ENCODE measurements at regions of chr11 and their contacts with region 1.

Region 1: GRCh38 chr11:2092956-2093412 is 46.2 kb downstream of the IGF2 start:
- DNase-seq: peak; percentile 95
- H3K4me3 ChIP-seq: no peak overlapping the region
- H3K27ac ChIP-seq: no peak overlapping the region
- H3K4me1 ChIP-seq: peaks cover 25% of the 10 kb centered on the region
- H3K27me3 ChIP-seq: peaks cover 25% of the 10 kb centered on the region
- CTCF ChIP-seq: no peak

Region 2: DNA sequence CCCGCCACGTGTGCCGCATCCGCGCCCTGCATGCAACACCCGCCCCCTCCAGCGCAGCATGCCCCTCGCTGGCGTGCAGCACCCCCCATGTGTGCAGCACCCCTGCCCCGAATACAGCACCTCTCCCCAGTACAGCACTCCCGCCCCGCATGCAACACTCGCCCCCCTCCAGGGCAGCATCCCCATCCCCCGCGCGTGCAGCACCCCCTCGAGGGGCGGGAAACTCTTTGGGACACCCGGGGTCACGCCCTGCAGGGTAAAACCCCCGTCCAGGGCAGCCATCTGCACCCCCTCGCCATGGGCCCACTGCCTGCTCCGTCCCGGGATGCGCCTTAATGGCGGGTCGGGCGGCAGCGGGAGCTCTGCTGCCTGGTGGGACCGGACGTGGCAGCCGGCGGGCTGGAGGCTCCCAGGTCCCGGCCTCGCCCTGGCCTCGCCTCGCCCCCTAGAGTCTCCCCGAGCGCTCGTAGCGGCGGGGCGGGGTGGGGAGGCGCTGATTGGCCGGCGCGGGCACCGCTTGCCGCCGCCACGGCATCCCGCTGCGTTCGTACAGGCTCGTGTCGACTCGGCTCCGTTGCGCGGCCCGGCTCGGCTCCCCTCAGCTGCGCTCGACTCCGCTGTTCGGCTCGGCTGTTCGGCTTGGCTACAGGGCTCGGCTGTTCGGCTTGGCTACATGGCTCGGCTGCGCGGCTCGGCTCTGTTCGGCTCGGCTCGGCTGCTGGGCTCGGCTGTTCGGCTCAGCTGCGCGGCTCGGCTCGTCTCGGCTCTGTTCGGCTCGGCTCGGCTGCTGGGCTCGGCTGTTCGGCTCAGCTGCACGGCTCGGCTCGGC is 703.7 kb before region 1 on chr11:
- CTCF ChIA-PET with region 1: no interaction called
- dilution Hi-C with region 1: loop called (anchors 10 kb)
- in situ Hi-C with region 1: no loop called
- intact Hi-C with region 1: no loop called
- DNase-seq: peak; percentile 92
- H3K4me3 ChIP-seq: peak overlapping the region; percentile 41 to 57 (median 55)
- H3K27ac ChIP-seq: no peak overlapping the region
- H3K4me1 ChIP-seq: peaks cover 9% of the 10 kb centered on the region
- H3K27me3 ChIP-seq: peaks cover 16% of the 10 kb centered on the region
- CTCF ChIP-seq: no peak

Region 3: GRCh38 chr11:2077061-2077802 is 15.8 kb before region 1 on chr11:
- CTCF ChIA-PET with region 1: no interaction called
- dilution Hi-C with region 1: no loop called
- in situ Hi-C with region 1: no loop called
- intact Hi-C with region 1: loop called (anchors 1 kb)
- DNase-seq: peak; percentile 94
- H3K4me3 ChIP-seq: no peak overlapping the region
- H3K27ac ChIP-seq: peak overlapping the region; percentile 87
- H3K4me1 ChIP-seq: peaks cover 26% of the 10 kb centered on the region
- H3K27me3 ChIP-seq: peaks cover 2% of the 10 kb centered on the region
- CTCF ChIP-seq: no peak

Region 4: DNA sequence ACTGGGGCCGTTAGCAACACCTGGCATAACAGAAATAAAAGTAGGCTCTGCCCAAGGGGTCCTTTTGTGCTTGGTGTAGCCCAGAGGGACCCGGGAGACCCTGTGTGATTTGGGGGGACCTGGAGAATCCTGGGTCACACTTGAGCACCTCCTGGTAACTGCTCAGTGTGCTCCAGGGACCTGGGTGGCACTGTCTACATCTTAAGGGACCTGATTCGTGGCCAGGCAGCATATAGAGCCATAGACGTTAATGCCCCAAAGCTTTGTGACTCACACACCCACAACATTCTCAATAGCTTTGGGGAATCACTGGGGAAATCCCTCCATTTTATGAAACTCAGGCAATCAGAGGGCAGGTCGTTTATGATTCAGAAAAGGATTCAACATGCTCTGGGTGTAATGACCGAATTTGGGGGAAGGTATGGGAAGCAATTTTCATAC is 49.8 kb after region 1 on chr11:
- CTCF ChIA-PET with region 1: no interaction called
- dilution Hi-C with region 1: no loop called
- in situ Hi-C with region 1: no loop called
- intact Hi-C with region 1: loop called (anchors 2 kb)
- DNase-seq: peak; percentile 89
- H3K4me3 ChIP-seq: no peak overlapping the region
- H3K27ac ChIP-seq: no peak overlapping the region
- H3K4me1 ChIP-seq: peaks cover 12% of the 10 kb centered on the region
- H3K27me3 ChIP-seq: peaks cover 68% of the 10 kb centered on the region
- CTCF ChIP-seq: no peak

Region 5: GRCh38 chr11:2237457-2238238 is 144.7 kb after region 1 on chr11:
- CTCF ChIA-PET with region 1: no interaction called
- dilution Hi-C with region 1: no loop called
- in situ Hi-C with region 1: no loop called
- intact Hi-C with region 1: no loop called
- DNase-seq: no peak
- H3K4me3 ChIP-seq: no peak overlapping the region
- H3K27ac ChIP-seq: no peak overlapping the region
- H3K4me1 ChIP-seq: no peaks in the 10 kb centered on the region
- H3K27me3 ChIP-seq: peaks cover 2% of the 10 kb centered on the region
- CTCF ChIP-seq: no peak